ENCODE measurements at regions of chr2 and their contacts with region 1.

Region 1: GRCh38 chr2:74554646-74555531 is at the start of gene DOK1:
- DNase-seq: peak; percentile 90
- CTCF ChIP-seq: no peak

Region 2: GRCh38 chr2:74573747-74574562 is 19.1 kb after region 1 on chr2:
- CTCF ChIA-PET with region 1: interaction called, 26 read pairs
- POLR2A ChIA-PET with region 1: no interaction called
- DNase-seq: peak; percentile 40
- CTCF ChIP-seq: no peak